Endothelial cell of umbilical vein (primary cell): ENCODE measurements at regions of chr22 and their contacts with region 1.

Region 1: GRCh38 chr22:22576244-22576988 is 17.4 kb upstream of the PRAME start:
- DNase-seq: peak; percentile 31
- H3K4me3 ChIP-seq: no peak overlapping the region
- H3K27ac ChIP-seq: no peak overlapping the region
- H3K4me1 ChIP-seq: no peaks in the 10 kb centered on the region
- H3K27me3 ChIP-seq: peaks cover 10 to 12% of the 10 kb centered on the region in 2 experiments
- CTCF ChIP-seq: peak; percentile 82 to 94
- POLR2A ChIP-seq: no peak

Region 2: DNA sequence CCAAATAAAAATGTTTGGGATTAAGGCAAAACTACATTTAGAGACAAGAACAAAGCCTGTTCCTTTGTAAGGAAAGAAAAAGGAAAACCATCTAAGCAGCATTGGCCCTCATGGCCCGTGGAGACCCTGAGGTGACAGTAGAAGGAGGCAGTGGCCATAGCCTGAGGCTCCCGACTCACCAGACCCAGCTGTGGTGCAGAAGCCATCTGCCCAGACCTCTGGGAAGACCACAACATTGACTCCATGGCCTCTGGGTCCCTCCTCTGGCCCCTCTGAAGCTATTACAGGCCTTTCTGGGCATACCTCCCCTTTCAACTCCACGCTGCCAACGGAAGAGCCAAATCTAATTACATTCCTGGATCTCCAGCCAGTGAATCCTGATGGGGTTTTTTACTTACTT is 23.8 kb before region 1 on chr22:
- CTCF ChIA-PET with region 1: interaction called, 10 read pairs
- POLR2A ChIA-PET with region 1: no interaction called
- dilution Hi-C with region 1: no loop called
- intact Hi-C with region 1: no loop called
- DNase-seq: no peak
- H3K4me3 ChIP-seq: no peak overlapping the region
- H3K27ac ChIP-seq: no peak overlapping the region
- H3K4me1 ChIP-seq: no peaks in the 10 kb centered on the region
- H3K27me3 ChIP-seq: peaks cover 2 to 11% of the 10 kb centered on the region in 2 experiments
- CTCF ChIP-seq: no peak
- POLR2A ChIP-seq: no peak

Region 3: GRCh38 chr22:22558972-22559603 is 17.3 kb before region 1 on chr22 and contains the start of gene PRAME:
- CTCF ChIA-PET with region 1: interaction called, 15 read pairs
- POLR2A ChIA-PET with region 1: no interaction called
- dilution Hi-C with region 1: no loop called
- intact Hi-C with region 1: no loop called
- DNase-seq: peak; percentile 27
- H3K4me3 ChIP-seq: no peak within 1 kb of the TSS
- H3K27ac ChIP-seq: no peak within 1 kb of the TSS
- H3K4me1 ChIP-seq: no peaks in the 10 kb centered on the region
- H3K27me3 ChIP-seq: no peaks in the 10 kb centered on the region
- CTCF ChIP-seq: peak; percentile 79 to 85
- POLR2A ChIP-seq: no peak
- total RNA-seq, gene PRAME: not detected in 2 replicates

Region 4: DNA sequence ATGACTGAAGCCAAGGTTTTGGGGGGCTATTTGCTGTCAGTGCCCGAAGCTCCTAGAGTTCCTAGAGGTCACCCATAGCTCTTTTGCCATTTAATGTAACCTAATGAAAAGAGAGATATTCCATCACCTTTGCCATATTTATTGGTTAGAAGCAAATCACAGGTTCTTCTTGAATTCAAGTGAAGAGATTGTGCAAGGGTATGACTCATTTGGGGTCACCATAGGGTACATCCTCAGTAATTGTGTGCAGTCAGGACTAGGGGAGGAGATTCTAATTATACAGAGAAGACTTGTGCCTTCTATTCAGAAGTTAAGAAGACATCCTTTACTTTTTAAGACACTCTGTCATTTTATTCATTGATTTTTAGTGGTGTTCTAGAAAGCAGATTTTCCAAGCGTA is 10.4 kb before region 1 on chr22:
- CTCF ChIA-PET with region 1: interaction called, 28 read pairs
- POLR2A ChIA-PET with region 1: no interaction called
- dilution Hi-C with region 1: no loop called
- intact Hi-C with region 1: no loop called
- DNase-seq: no peak
- H3K4me3 ChIP-seq: no peak overlapping the region
- H3K27ac ChIP-seq: no peak overlapping the region
- H3K4me1 ChIP-seq: no peaks in the 10 kb centered on the region
- H3K27me3 ChIP-seq: peaks cover 6 to 9% of the 10 kb centered on the region in 2 experiments
- CTCF ChIP-seq: no peak
- POLR2A ChIP-seq: no peak

Region 5: DNA sequence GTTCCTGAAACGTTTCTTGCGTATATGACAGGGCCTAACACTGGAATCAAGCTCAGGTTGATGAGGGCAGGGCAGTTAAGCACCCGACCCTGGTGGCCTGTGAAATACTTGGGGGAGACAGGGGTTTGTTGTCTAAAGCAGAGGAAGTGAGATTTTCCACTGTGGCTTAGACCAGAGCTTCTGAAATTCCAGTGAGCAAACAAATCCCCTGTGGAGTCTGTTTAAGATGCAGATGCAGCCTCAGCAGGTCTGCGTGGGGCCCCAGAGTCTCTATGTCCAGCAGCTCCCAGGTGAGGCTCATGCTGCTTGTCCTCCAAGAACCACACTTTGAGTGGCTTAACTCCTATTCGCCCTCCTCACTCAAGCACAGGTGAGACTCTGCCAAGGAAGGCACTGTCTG is 21.7 kb after region 1 on chr22:
- CTCF ChIA-PET with region 1: interaction called, 10 read pairs
- POLR2A ChIA-PET with region 1: no interaction called
- dilution Hi-C with region 1: no loop called
- intact Hi-C with region 1: no loop called
- DNase-seq: no peak
- H3K4me3 ChIP-seq: no peak overlapping the region
- H3K27ac ChIP-seq: no peak overlapping the region
- H3K4me1 ChIP-seq: no peaks in the 10 kb centered on the region
- H3K27me3 ChIP-seq: peaks cover 0 to 2% of the 10 kb centered on the region in 2 experiments
- CTCF ChIP-seq: no peak
- POLR2A ChIP-seq: no peak